ENCODE measurements at regions of chr6 and their contacts with region 1.

Region 1: GRCh38 chr6:30453508-30454116 is 35.7 kb upstream of the HLA-E start:
- DNase-seq: peak; percentile 96
- ATAC-seq: peak; percentile 95
- H3K4me3 Mint-ChIP-seq: no peak overlapping the region
- H3K27ac Mint-ChIP-seq: no peak overlapping the region
- H3K4me1 Mint-ChIP-seq: peaks cover 5% of the 10 kb centered on the region; the same call in 1 of the 2 replicates
- H3K27me3 Mint-ChIP-seq: peaks cover 89% of the 10 kb centered on the region
- CTCF ChIP-seq: peak; percentile 88

Region 2: GRCh38 chr6:30357678-30358540 is 95.7 kb before region 1 on chr6:
- CTCF ChIA-PET with region 1: interaction called, 12 read pairs
- POLR2A ChIA-PET with region 1: no interaction called
- DNase-seq: peak; percentile 81
- ATAC-seq: peak; percentile 85
- H3K4me3 Mint-ChIP-seq: peak overlapping the region; percentile 87
- H3K27ac Mint-ChIP-seq: no peak overlapping the region
- H3K4me1 Mint-ChIP-seq: peaks cover 8% of the 10 kb centered on the region; the same call in 1 of the 2 replicates
- H3K27me3 Mint-ChIP-seq: peaks cover 50% of the 10 kb centered on the region
- CTCF ChIP-seq: peak; percentile 61

Region 3: GRCh38 chr6:30411515-30412207 is 42.0 kb before region 1 on chr6:
- CTCF ChIA-PET with region 1: interaction called, 16 read pairs
- POLR2A ChIA-PET with region 1: no interaction called
- DNase-seq: peak; percentile 80
- ATAC-seq: peak; percentile 97
- H3K4me3 Mint-ChIP-seq: peak overlapping the region; percentile 53
- H3K27ac Mint-ChIP-seq: no peak overlapping the region
- H3K4me1 Mint-ChIP-seq: peaks cover 6% of the 10 kb centered on the region
- H3K27me3 Mint-ChIP-seq: peaks cover 73% of the 10 kb centered on the region
- CTCF ChIP-seq: peak; percentile 79

Region 4: GRCh38 chr6:30483677-30484279 is 30.2 kb after region 1 on chr6:
- CTCF ChIA-PET with region 1: interaction called, 29 read pairs
- POLR2A ChIA-PET with region 1: no interaction called
- DNase-seq: no peak
- ATAC-seq: no peak
- H3K4me3 Mint-ChIP-seq: no peak overlapping the region
- H3K27ac Mint-ChIP-seq: no peak overlapping the region
- H3K4me1 Mint-ChIP-seq: peaks cover 9% of the 10 kb centered on the region
- H3K27me3 Mint-ChIP-seq: peaks cover 50% of the 10 kb centered on the region
- CTCF ChIP-seq: 0 out of 2 replicates have a peak, but pooled peaks have one; percentile 21